AG04450 (cell line): ENCODE measurements at regions of chr7 and their contacts with region 1.

Region 1: GRCh38 chr7:92633211-92633906 is 43.2 kb upstream of the FAM133B start:
- DNase-seq: peak; percentile 57
- H3K4me3 ChIP-seq: no peak overlapping the region; the same call in 1 of the 2 replicates
- H3K27ac ChIP-seq: peak overlapping the region; percentile 23
- H3K27me3 ChIP-seq: no peaks in the 10 kb centered on the region
- CTCF ChIP-seq: no peak

Region 2: GRCh38 chr7:92504563-92504962 is 128.8 kb before region 1 on chr7:
- CTCF ChIA-PET with region 1: no interaction called
- POLR2A ChIA-PET with region 1: no interaction called
- DNase-seq: no peak
- H3K4me3 ChIP-seq: no peak overlapping the region
- H3K27ac ChIP-seq: no peak overlapping the region
- H3K27me3 ChIP-seq: no peaks in the 10 kb centered on the region
- CTCF ChIP-seq: no peak

Region 3: GRCh38 chr7:92621026-92621540 is 12.3 kb before region 1 on chr7:
- CTCF ChIA-PET with region 1: interaction called, 25 read pairs
- POLR2A ChIA-PET with region 1: no interaction called
- DNase-seq: peak; percentile 85
- H3K4me3 ChIP-seq: no peak overlapping the region
- H3K27ac ChIP-seq: no peak overlapping the region
- H3K27me3 ChIP-seq: no peaks in the 10 kb centered on the region
- CTCF ChIP-seq: peak; percentile 77

Region 4: DNA sequence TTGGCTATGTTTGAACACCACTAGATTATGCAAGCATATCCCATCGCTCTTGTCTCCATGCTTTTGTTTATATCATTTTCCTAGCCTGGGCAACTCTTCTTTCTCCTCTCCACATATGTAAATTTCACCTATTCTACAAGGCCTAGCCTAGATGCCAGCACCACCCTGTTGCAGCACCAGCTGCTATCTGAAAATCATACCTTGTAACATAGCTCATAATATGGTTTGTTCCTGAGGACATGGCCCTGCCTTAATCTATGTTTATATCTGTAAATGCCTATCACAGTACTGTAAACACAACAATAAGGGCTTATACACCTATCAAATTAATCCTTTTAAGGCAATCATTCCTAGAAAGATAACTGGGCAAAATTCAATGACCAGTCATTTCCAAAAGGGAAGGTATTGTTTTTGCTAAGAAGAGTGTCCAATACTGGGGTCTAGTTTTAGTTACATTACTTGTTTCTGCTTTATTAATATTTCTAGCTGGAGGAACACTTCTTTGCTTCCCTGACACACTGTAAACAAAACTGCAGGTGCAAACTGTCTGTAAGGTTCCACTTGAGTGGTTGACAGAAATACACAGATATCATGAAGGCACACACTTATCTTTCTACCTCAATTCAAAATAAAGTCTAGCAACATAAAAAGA is 40.9 kb after region 1 on chr7:
- CTCF ChIA-PET with region 1: no interaction called
- POLR2A ChIA-PET with region 1: no interaction called
- DNase-seq: no peak
- H3K4me3 ChIP-seq: no peak overlapping the region
- H3K27ac ChIP-seq: no peak overlapping the region
- H3K27me3 ChIP-seq: no peaks in the 10 kb centered on the region
- CTCF ChIP-seq: no peak